HepG2 (cell line): ENCODE measurements at regions of chr17 and their contacts with region 1.

Region 1: DNA sequence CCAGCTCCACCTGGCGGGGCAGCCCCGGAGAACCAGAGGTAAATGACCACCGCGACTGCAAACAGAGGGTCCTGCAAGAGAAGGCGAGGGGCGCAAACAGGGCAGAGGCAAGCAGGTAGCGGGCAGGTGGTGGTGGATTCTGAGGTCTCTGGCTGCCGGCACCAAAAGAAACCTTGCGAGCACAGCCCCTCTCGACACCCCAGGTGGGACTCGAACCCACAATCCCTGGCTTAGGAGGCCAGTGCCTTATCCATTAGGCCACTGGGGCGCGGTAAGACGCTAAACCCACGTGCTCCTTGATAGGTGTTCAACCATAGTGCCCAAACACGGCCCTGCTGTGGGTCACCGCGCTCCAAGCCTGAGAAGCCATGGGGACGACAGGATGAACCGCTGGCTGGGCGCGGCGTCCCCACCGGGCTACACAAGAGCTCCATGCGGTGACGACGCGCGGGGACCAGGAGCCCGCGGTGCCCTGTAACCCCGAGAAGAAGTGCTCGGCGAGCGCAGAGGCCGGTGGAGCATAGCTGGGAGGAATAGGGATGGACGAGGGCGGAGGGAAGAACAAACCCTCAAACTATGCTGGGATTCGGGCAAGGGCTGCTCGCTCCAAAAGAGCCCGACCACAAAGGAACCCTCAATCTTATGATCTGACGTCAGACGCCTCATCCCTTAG is 12.4 kb downstream of the ATP5PD start:
- DNase-seq: peak; percentile 94
- ATAC-seq: peak; percentile 58
- H3K4me3 ChIP-seq: peak overlapping the region; percentile 76 to 93 (median 91)
- H3K27ac ChIP-seq: peak overlapping the region; percentile 94
- H3K4me1 ChIP-seq: peaks cover 37% of the 10 kb centered on the region
- H3K27me3 ChIP-seq: peaks cover 0 to 6% of the 10 kb centered on the region in 2 experiments; a peak in 3 of 5 replicates
- CTCF ChIP-seq: peak; percentile 48
- EP300 ChIP-seq: no peak
- POLR2A ChIP-seq: no peak
- RAD21 ChIP-seq: no peak

Region 2: DNA sequence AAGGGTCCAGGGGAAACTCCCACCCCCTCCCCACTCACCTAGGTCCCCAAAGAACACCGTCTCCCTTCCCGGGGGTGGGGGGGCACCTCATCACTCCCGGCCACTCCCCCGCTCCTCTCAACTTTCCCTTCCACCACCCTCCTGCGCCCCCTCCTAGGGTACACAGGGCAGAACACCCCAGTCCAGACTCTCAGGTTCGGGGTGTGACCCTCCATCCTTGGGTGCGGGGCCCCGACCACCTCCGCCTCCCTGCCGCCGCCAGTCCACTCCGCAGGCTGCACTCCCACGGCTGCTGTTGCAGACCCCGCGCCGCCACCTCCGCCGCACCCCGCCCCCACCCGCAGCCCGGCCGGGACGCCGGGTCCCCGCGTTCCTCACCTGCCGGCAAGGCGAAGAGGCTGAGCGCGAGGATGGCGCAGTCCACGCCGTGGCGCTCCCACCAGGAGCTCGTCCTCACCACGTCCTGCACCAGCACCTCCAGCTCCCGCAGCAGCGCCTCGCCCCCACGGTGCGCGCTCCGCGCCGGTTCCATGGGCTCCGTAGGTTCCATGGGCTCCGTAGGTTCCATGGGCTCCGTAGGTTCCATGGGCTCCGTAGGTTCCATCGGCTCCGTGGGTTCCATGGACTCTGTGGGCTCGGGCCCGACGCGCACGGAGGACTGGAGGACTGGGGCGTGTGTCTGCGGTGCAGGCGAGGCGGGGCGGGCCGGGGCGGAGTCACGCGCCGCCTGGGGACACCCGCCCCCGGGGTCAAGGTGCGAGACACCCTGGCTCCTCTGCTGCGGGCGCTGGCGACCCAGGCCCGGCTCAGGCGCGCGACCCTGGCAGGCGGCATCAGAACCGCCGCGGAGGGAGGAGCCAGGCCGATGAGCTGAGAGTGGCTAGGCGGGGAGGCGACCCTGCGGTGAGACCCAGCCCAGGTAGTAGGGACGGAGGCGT is 141.1 kb before region 1 on chr17 and contains the start of gene FADS6:
- CTCF ChIA-PET with region 1: no interaction called
- POLR2A ChIA-PET with region 1: no interaction called
- in situ Hi-C with region 1: no loop called
- intact Hi-C with region 1: no loop called
- DNase-seq: no peak
- ATAC-seq: peak; percentile 61
- H3K4me3 ChIP-seq: peak within 1 kb of the TSS; percentile 26 to 61 (median 41); a peak in 4 of 6 replicates
- H3K27ac ChIP-seq: no peak within 1 kb of the TSS
- H3K4me1 ChIP-seq: peaks cover 26% of the 10 kb centered on the region
- H3K27me3 ChIP-seq: peaks cover 10 to 71% of the 10 kb centered on the region in 2 experiments
- CTCF ChIP-seq: no peak
- EP300 ChIP-seq: no peak
- POLR2A ChIP-seq: no peak
- RAD21 ChIP-seq: no peak
- total RNA-seq, gene FADS6: 0.11 TPM in 1 of 2 replicates, not detected in the other

Region 3: GRCh38 chr17:74981979-74982662 is 52.3 kb before region 1 on chr17:
- CTCF ChIA-PET with region 1: no interaction called
- POLR2A ChIA-PET with region 1: interaction called, 9 read pairs
- in situ Hi-C with region 1: no loop called
- intact Hi-C with region 1: loop called (anchors 1 kb)
- DNase-seq: peak; percentile 72
- ATAC-seq: peak; percentile 97
- H3K4me3 ChIP-seq: peak overlapping the region; percentile 72 to 88 (median 76)
- H3K27ac ChIP-seq: peak overlapping the region; percentile 29
- H3K4me1 ChIP-seq: peaks cover 32% of the 10 kb centered on the region
- H3K27me3 ChIP-seq: peaks cover 0 to 16% of the 10 kb centered on the region in 2 experiments; a peak in 3 of 5 replicates
- CTCF ChIP-seq: peak; percentile 62
- EP300 ChIP-seq: no peak; a peak in 1 of 4 replicates
- POLR2A ChIP-seq: peak; percentile 74 to 95
- RAD21 ChIP-seq: peak; percentile 71

Region 4: DNA sequence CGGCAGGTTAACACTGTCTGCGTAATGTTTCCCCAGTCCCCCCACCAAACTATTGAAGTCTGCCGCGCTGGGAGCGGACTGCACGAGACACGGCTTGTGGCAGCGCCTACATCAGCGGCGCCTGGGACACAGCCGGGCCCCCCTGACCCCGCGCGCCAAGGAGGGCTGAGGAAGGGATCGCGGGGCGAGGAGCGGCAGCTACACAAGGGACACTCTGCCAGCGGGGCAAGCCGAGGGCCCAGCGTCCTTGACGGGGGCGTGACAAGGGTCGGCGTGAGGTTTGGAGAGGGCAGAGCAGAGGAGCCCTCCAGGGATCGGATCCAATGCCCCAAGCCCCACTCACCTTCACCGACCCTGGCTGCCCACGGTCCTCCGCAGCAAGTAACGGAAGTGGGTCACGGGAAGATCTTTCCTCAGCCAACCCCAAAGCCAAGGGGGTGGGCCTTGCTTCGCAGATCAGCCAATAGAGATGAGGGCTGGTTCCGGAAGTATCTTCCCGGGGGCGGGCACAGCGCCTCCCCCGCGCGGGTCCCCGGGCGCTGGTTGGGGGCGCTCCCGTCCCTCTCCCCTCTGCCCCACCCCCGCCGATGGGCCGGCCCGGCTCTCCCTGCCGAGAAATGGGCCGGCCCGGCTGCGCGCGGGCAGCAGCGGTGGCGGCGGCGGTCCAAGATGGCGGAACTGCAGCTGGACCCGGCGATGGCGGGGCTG is 12.4 kb after region 1 on chr17 and contains the starts of genes ATP5PD and KCTD2:
- CTCF ChIA-PET with region 1: no interaction called
- POLR2A ChIA-PET with region 1: interaction called, 76 read pairs
- in situ Hi-C with region 1: no loop called
- intact Hi-C with region 1: loop called (anchors 1 kb)
- DNase-seq: peak; percentile 97
- ATAC-seq: peak; percentile 98
- H3K4me3 ChIP-seq: peak within 1 kb of the TSS; percentile 75 to 98 (median 90)
- H3K27ac ChIP-seq: peak within 1 kb of the TSS; percentile 92
- H3K4me1 ChIP-seq: peaks cover 29% of the 10 kb centered on the region
- H3K27me3 ChIP-seq: no peaks in the 10 kb centered on the region; a peak in 1 of 5 replicates
- CTCF ChIP-seq: peak; percentile 40
- EP300 ChIP-seq: peak in 1 of 2 experiments; percentile 56; a peak in 1 of 4 replicates
- POLR2A ChIP-seq: peak; percentile 98 to 99
- RAD21 ChIP-seq: peak; percentile 18
- total RNA-seq, gene ATP5PD: 428 and 565 TPM in 2 replicates
- total RNA-seq, gene KCTD2: 27.5 and 28.3 TPM in 2 replicates

Region 5: GRCh38 chr17:75069783-75070182 is 35.4 kb after region 1 on chr17:
- CTCF ChIA-PET with region 1: no interaction called
- POLR2A ChIA-PET with region 1: no interaction called
- in situ Hi-C with region 1: no loop called
- intact Hi-C with region 1: no loop called
- DNase-seq: no peak
- ATAC-seq: peak; percentile 22; the same call in 1 of the 3 replicates
- H3K4me3 ChIP-seq: no peak overlapping the region
- H3K27ac ChIP-seq: no peak overlapping the region
- H3K4me1 ChIP-seq: peaks cover 36% of the 10 kb centered on the region
- H3K27me3 ChIP-seq: peaks cover 0 to 14% of the 10 kb centered on the region in 2 experiments; a peak in 3 of 5 replicates
- CTCF ChIP-seq: peak; percentile 54
- EP300 ChIP-seq: no peak
- POLR2A ChIP-seq: no peak
- RAD21 ChIP-seq: peak; percentile 52; the same call in 1 of the 2 replicates

Region 6: GRCh38 chr17:75087558-75088453 is 53.4 kb after region 1 on chr17 and contains the start of gene SLC16A5:
- CTCF ChIA-PET with region 1: no interaction called
- POLR2A ChIA-PET with region 1: interaction called, 12 read pairs
- in situ Hi-C with region 1: no loop called
- intact Hi-C with region 1: loop called (anchors 2 kb)
- DNase-seq: peak; percentile 91
- ATAC-seq: peak; percentile 63
- H3K4me3 ChIP-seq: peak within 1 kb of the TSS; percentile 57 to 76 (median 68)
- H3K27ac ChIP-seq: peak within 1 kb of the TSS; percentile 63
- H3K4me1 ChIP-seq: peaks cover 97% of the 10 kb centered on the region
- H3K27me3 ChIP-seq: 0 out of 5 replicates have a peak, but pooled peaks cover 0 to 11% of the 10 kb centered on the region in 2 experiments
- CTCF ChIP-seq: no peak
- EP300 ChIP-seq: peak in 1 of 2 experiments; percentile 19; a peak in 1 of 4 replicates
- POLR2A ChIP-seq: no peak; a peak in 1 of 4 replicates
- RAD21 ChIP-seq: peak; percentile 22
- total RNA-seq, gene SLC16A5: 0.42 and 0.69 TPM in 2 replicates

Region 7: GRCh38 chr17:75205037-75205792 is 170.8 kb after region 1 on chr17 and contains the start of gene NUP85:
- CTCF ChIA-PET with region 1: no interaction called
- POLR2A ChIA-PET with region 1: interaction called, 14 read pairs
- in situ Hi-C with region 1: no loop called
- intact Hi-C with region 1: no loop called
- DNase-seq: peak; percentile 96
- ATAC-seq: peak; percentile 88
- H3K4me3 ChIP-seq: peak within 1 kb of the TSS; percentile 82 to 96 (median 86)
- H3K27ac ChIP-seq: peak within 1 kb of the TSS; percentile 97
- H3K4me1 ChIP-seq: peaks cover 40% of the 10 kb centered on the region
- H3K27me3 ChIP-seq: no peaks in the 10 kb centered on the region; a peak in 1 of 5 replicates
- CTCF ChIP-seq: peak; percentile 12
- EP300 ChIP-seq: peak in 1 of 2 experiments; percentile 16; a peak in 1 of 4 replicates
- POLR2A ChIP-seq: peak; percentile 87 to 92
- RAD21 ChIP-seq: peak; percentile 9; the same call in 1 of the 2 replicates
- total RNA-seq, gene NUP85: 122 and 124 TPM in 2 replicates